Posterior vena cava (tissue), 2 donors: ENCODE measurements at regions of chrX and their contacts with region 1.

Region 1: DNA sequence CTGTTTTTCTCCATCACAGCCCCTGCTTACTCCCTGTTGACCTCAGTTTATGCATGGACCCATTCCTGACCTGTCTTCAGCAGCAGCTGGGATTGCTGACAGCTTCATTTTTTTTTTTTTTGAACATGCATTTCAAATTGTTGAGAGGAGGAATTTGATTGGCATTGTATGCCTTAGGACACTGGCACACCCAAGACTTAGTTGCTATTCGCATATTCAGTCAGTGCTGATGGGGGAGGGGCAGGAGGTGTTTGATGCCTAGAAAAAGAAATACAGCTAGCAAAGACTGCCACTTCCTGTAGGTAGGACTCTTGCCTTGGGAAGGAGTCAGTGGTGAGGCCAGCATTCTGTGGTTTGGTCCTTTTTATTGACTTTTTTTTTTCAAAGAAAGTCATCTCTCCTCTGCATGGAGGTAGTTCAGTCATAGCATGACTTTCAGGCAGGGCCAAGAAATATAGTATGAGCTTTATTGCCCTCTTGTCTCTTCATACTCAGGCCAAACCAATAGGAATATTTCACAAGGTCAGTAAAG is 33.6 kb upstream of the XK start:
- DNase-seq: no peak

Region 2: DNA sequence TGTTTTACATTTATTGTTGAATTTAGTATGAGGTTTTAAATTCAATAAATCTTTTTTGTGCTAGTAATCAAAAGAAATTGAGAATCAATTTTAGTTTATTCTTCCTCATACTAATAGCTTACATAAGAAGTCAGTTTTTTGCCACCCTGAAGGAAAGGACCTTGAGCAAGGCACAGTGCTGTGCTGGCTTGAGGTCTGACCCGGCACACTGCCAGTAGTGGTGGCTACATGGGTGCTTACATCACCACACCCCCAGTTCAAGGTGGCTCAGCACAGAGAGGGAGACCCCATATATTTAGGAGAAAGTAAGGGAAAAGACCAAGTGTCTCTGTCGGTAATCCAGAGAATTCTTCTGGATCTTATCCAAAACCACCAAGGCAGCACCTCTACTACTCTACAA is 166.6 kb before region 1 on chrX:
- intact Hi-C with region 1: loop called in 1 of 2 experiments (anchors 5 kb)
- DNase-seq: no peak

Region 3: GRCh38 chrX:37666516-37666915 is 14.5 kb after region 1 on chrX:
- intact Hi-C with region 1: no loop called
- DNase-seq: no peak

Region 4: GRCh38 chrX:37776283-37776986 is 124.4 kb after region 1 on chrX:
- intact Hi-C with region 1: no loop called
- DNase-seq: no peak